ENCODE measurements at regions of chrX and their contacts with region 1.

Region 1: GRCh38 chrX:71652405-71652804 is 14.9 kb upstream of the LOC101059915 start:
- DNase-seq: peak in 3 of 10 donors; percentile 15 to 25 (median 22)

Region 2: DNA sequence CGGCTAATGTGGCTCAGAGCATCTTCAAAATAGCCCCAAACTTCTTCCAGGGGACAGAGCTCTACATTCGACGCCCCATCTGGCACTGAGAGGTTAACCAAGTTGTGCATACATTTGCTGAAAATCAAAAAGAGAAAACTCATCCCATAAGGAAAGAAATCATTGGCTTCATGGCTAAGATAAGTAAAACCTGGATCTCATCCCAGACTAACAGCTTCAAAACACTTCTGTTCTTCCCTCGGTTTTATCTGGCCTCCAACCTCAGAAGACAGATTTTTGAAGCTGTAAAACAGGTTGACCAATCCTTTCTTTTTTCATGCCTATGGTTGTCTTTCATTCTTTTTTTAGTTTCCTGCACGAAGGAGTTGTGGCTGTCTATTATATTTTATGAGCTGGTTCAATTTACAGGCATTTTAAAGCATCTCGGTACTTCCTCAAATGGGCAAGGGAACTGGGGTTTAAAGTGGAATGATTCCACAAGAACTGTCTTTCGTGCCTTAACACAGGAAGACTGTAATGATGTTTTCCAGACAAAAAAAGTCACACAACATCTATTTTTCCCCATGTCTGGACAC is 1100.2 kb before region 1 on chrX:
- intact Hi-C with region 1: no loop called
- DNase-seq: no peak

Region 3: GRCh38 chrX:71432733-71433132 is 219.7 kb before region 1 on chrX:
- intact Hi-C with region 1: loop called (anchors 5 kb)
- DNase-seq: no peak

Region 4: DNA sequence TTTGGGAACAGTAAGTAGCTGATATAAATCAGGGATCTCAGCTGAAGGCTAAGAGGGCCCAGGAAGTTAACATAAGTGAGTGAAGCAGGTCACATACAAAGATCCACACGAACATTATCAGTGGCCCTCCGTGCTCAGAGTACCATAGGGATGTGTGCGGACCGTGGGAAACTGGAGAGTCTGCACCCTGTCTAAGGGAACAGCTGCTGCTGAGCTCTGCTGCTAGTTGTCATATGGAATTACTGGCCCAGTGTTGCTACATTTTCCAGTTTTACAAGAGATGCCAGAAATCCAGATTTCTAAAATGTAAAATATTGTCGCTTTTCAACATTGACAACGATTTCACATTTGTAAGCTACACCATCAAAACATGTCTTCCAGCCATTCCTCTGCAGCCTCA is 388.8 kb after region 1 on chrX:
- intact Hi-C with region 1: no loop called
- DNase-seq: no peak

Measured in posterior cingulate gyrus (tissue), 11 donors.